Heart left ventricle (tissue), 16 donors: ENCODE measurements at regions of chr5 and their contacts with region 1.

Region 1: DNA sequence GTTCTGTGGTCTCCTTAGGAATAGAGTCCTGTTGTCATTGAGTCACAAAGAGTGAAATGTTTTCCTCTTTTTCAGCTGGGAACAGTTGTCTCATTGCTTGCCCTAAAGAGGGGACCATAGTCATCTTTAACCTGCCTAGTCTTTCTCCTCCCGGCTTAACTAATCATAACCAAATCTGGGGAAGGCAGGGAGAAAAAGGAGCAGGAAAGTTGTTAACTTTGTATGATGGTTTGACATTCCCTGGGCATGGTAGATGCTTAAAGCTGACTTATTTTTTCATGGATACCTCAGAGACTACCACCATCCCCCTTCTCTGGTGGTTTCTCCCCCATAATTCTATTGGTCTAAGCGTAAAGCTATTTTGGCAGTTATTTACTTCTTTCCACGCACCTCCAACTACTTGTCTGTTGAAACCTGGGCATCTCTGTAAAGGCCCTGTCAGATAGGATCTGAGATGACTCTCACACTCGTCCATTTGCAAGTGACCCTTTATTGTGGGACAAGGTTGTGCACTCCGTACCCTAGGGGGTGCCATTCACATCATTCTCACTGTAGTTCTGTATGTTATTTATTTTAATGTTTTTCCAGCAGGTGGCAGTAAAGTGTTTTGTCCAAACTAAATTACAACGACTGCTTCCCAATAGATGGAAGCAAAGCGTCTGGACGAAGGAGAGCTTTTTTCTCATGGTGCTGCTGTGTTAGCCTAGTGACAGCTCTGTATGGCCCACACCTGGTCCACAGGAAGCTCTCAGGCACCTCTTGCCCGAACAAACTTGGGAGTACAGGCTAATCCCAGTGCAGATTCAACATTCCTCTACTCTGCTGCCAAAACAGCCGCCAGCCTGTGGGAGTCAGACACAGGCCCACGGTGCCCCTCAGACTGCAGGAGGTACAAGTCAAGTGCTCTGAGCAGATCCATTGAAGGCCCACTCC is 3.0 kb upstream of the FAM13B start:
- DNase-seq: peak in 4 of 5 donors; percentile 48 to 65 (median 62)
- ATAC-seq: peak; percentile 50 to 70 (median 60)
- H3K4me3 ChIP-seq: no peak overlapping the region
- H3K27ac ChIP-seq: peak overlapping the region in 5 of 12 donors; percentile 23 to 55 (median 48)
- H3K4me1 ChIP-seq: peaks cover 0 to 38% (median 19%) of the 10 kb centered on the region in 12 donors
- H3K27me3 ChIP-seq: no peaks in the 10 kb centered on the region
- CTCF ChIP-seq: peak; percentile 70 to 95 (median 84)
- POLR2A ChIP-seq: no peak

Region 2: GRCh38 chr5:137629646-137630045 is 406.2 kb before region 1 on chr5:
- intact Hi-C with region 1: loop called in 1 of 10 experiments (anchors 10 kb)
- DNase-seq: no peak
- ATAC-seq: peak; percentile 20 to 74 (median 60)
- H3K4me3 ChIP-seq: no peak overlapping the region
- H3K27ac ChIP-seq: peak overlapping the region in 11 of 12 donors; percentile 25 to 74 (median 57)
- H3K4me1 ChIP-seq: peaks cover 0 to 36% (median 20%) of the 10 kb centered on the region in 12 donors
- H3K27me3 ChIP-seq: no peaks in the 10 kb centered on the region
- CTCF ChIP-seq: peak; percentile 82 to 97 (median 90)
- POLR2A ChIP-seq: no peak

Region 3: GRCh38 chr5:137778772-137779564 is 256.9 kb before region 1 on chr5:
- intact Hi-C with region 1: loop called in 5 of 10 experiments (anchors 5 to 10 kb)
- DNase-seq: no peak
- ATAC-seq: no peak
- H3K4me3 ChIP-seq: no peak overlapping the region
- H3K27ac ChIP-seq: no peak overlapping the region
- H3K4me1 ChIP-seq: peaks cover 0 to 7% (median 0%) of the 10 kb centered on the region in 12 donors
- H3K27me3 ChIP-seq: no peaks in the 10 kb centered on the region
- CTCF ChIP-seq: peak; percentile 64 to 85 (median 74)
- POLR2A ChIP-seq: no peak

Region 4: DNA sequence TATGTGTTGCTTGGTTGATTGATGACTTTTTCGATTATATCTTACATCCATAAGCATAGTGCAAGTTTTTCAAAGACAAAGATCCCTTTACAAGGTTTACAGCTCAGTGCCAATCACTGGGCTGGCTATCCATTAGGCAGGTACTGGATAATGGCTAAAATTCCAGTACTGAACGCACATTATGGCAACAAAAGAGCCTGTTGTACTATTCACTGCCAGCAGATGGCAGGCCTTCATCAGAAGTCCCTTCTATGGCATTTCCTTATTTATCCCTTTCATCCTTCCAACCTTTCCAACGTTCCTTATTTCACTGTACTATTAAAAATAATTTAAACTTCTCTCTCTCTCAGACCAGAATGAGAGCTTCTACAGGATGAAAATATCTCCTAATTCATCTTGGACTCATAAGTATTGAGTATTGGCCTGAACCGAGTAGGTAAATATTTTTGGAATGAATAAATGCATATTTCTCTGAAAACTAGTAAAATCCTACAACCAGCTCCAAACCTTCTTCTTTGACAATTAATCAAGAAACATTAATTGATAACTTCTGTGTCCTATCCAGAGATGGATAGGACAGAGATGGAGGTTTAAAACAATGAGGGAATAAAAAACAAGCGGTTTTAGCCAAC is 41.3 kb after region 1 on chr5:
- intact Hi-C with region 1: loop called in 1 of 10 experiments (anchors 5 kb)
- DNase-seq: peak in 4 of 5 donors; percentile 32 to 63 (median 43)
- ATAC-seq: peak in 3 of 4 donors; percentile 53 to 72 (median 67)
- H3K4me3 ChIP-seq: no peak overlapping the region
- H3K27ac ChIP-seq: no peak overlapping the region
- H3K4me1 ChIP-seq: peaks cover 0 to 10% (median 0%) of the 10 kb centered on the region in 12 donors
- H3K27me3 ChIP-seq: no peaks in the 10 kb centered on the region
- CTCF ChIP-seq: peak; percentile 67 to 91 (median 85)
- POLR2A ChIP-seq: no peak

Region 5: DNA sequence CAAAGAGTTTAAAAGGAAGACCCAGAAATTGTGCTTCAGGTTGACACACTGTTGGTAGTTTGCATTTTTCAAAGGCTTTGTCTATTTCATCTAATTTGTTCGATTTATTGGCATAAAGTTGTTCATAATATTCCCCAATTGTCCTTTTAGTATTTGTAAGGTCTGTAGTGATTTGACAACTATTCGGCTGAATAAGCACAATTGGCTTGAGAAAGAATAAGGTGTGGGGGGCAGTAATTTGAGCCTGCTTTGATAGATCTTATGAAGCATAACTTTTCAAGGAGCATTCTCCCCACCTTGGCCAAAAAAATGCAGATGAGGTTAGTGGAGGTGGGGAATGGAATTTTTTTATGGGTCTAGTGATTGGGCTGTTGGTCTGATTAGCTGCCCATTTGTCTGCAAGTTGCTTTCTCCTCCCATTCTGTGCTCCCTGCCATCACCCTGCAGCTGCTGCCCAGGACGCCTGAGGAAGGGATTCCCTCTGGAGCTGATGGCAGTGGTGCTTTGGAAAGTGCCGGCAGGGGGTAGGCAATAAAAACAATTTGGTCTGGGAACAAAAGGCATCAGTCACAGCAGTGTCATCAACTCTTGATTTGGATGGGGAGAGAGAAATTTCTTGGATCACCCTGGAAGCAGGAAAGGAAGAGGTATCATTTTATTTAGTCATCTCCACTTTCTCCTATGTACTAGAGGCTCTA is 74.5 kb after region 1 on chr5:
- intact Hi-C with region 1: no loop called
- DNase-seq: no peak
- ATAC-seq: no peak
- H3K4me3 ChIP-seq: no peak overlapping the region
- H3K27ac ChIP-seq: no peak overlapping the region
- H3K4me1 ChIP-seq: no peaks in the 10 kb centered on the region
- H3K27me3 ChIP-seq: peaks cover 0 to 7% (median 0%) of the 10 kb centered on the region in 9 donors
- CTCF ChIP-seq: no peak
- POLR2A ChIP-seq: no peak

Region 6: DNA sequence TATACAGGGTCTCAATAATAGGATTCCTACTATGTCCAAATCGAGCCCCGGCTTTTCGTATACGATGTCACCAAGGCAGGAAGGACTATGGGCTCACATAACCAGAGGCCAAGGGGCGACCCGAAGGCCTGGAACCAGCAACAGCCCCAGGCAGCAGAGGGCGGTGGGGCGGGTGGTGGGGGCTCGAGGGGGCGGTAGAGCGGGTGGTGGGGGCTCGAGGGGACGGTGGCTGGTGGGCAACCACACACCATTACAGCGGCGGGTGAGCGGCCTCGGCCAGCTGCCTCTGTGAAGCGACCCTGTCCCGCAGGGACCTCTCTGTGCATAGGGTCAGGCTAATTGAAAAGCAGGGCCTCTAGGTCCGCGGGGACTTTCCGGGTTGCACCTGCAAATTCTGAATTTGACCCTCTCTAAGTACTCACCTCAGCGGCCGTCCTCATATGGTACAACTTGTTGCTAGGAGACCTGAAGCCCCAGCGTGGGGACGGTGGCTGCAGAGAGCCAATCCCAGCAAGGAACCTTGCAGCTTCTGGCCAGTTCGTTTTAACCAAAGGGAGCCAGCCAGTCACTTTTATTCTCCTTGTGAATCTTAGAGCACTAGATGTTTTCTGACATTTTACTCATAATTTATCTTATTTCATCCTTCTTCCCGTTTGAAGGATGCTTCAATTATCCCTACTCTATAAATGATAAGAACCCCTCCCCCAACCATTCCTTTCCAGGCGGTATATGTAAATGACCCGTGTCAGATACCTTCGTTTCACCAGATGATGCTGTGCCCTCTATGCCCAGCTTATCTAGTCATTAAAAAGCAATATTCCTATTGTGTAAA is 103.3 kb after region 1 on chr5 and contains the start of gene NME5:
- intact Hi-C with region 1: loop called in 4 of 10 experiments (anchors 5 to 10 kb)
- DNase-seq: peak; percentile 55 to 80 (median 76)
- ATAC-seq: peak; percentile 71 to 96 (median 94)
- H3K4me3 ChIP-seq: peak within 1 kb of the TSS in 11 of 12 donors; percentile 24 to 83 (median 66)
- H3K27ac ChIP-seq: peak within 1 kb of the TSS in 1 of 12 donors; percentile 16
- H3K4me1 ChIP-seq: peaks cover 0 to 7% (median 0%) of the 10 kb centered on the region in 12 donors
- H3K27me3 ChIP-seq: peaks cover 0 to 22% (median 0%) of the 10 kb centered on the region in 9 donors
- CTCF ChIP-seq: no peak
- POLR2A ChIP-seq: no peak
- total RNA-seq, gene NME5: 0.50 to 5.1 (median 3.4) TPM